HEK293 (cell line): ENCODE measurements at regions of chr5 and their contacts with region 1.

Region 1: DNA sequence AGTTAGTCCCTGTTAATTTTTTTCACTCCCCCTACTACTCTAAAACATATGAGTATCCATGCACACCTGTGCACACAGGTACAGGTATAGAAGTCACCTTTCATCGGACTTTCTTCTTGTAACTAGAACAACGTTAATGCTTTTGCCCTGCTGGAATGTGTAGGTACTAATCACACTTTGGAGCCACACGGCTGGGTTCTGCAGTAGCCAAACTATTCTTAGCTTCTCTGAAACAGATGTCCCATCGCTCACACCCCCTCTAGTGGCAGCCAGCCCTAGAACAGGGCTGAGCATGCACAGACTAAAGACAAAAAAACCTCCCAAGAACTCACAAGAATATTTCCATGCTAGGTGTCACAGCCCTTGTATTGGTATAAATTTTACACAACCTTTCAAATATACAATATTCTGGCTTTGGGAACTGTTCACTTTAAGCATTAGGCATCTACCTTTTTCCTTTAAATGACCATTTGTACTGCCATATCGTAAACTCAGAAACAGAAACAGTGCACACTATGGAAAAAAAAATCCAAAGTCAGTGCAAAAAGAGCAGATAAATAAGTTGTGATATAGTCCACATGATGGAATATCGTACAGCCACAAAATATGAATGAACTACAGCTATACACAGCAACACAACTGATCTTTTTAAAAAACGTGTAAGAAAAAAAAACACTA is 64.0 kb downstream of the RETREG1 start:
- H3K4me3 ChIP-seq: no peak overlapping the region
- H3K27ac ChIP-seq: no peak overlapping the region
- H3K4me1 ChIP-seq: no peaks in the 10 kb centered on the region
- CTCF ChIP-seq: peak; percentile 69

Region 2: GRCh38 chr5:16456103-16456832 is 96.5 kb before region 1 on chr5:
- CTCF ChIA-PET with region 1: interaction called, 10 read pairs
- POLR2A ChIA-PET with region 1: no interaction called
- H3K4me3 ChIP-seq: no peak overlapping the region
- H3K27ac ChIP-seq: no peak overlapping the region
- H3K4me1 ChIP-seq: no peaks in the 10 kb centered on the region
- CTCF ChIP-seq: no peak

Region 3: GRCh38 chr5:16489322-16489791 is 63.4 kb before region 1 on chr5:
- CTCF ChIA-PET with region 1: interaction called, 61 read pairs
- POLR2A ChIA-PET with region 1: no interaction called
- H3K4me3 ChIP-seq: no peak overlapping the region
- H3K27ac ChIP-seq: no peak overlapping the region
- H3K4me1 ChIP-seq: no peaks in the 10 kb centered on the region
- CTCF ChIP-seq: peak; percentile 48; the same call in 1 of the 2 replicates

Region 4: DNA sequence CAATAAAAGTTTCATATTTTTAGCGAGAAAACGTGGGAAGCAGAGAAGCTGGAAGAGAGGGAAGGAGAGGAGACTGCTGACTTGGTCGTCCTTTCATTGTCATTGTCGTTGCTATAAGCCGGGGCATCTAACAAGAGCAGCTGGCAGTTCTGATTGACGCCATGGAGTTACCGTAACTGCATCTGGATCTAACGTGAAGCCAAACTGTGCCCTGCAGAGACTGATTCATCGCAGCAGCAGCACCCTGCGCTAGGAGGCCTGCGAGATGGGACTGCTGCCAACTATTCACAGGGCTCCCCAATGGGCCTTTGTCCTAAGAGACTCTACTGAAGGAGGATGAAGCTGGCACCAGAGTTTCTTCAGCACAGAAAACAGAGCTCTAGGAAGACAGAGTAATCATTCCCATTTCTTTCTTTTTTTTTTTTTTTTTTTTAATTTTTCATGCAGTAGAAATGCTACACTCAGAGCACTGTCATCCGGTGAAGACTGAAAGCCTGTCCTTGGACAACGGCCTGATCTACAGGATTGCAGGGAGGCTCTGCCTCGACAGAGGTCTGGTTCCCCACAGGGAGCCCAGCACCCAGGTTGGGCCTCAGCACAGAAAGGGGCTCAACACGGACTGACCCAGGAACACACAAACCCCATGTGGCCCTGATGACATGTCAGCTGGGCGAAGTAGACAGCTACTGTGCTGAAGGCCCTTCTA is 16.2 kb after region 1 on chr5:
- CTCF ChIA-PET with region 1: interaction called, 125 read pairs
- POLR2A ChIA-PET with region 1: no interaction called
- H3K4me3 ChIP-seq: no peak overlapping the region
- H3K27ac ChIP-seq: no peak overlapping the region
- H3K4me1 ChIP-seq: no peaks in the 10 kb centered on the region
- CTCF ChIP-seq: no peak

Region 5: GRCh38 chr5:16585041-16585667 is 32.3 kb after region 1 on chr5:
- CTCF ChIA-PET with region 1: interaction called, 11 read pairs
- POLR2A ChIA-PET with region 1: no interaction called
- H3K4me3 ChIP-seq: no peak overlapping the region
- H3K27ac ChIP-seq: no peak overlapping the region
- H3K4me1 ChIP-seq: no peaks in the 10 kb centered on the region
- CTCF ChIP-seq: no peak